HCT116 (cell line): ENCODE measurements at regions of chr20 and their contacts with region 1.

Region 1: GRCh38 chr20:1776681-1777475 is 118.3 kb upstream of the SIRPA start:
- DNase-seq: peak; percentile 79
- ATAC-seq: peak; percentile 90
- H3K4me3 ChIP-seq: peak overlapping the region; percentile 79 to 83
- H3K27ac ChIP-seq: peak overlapping the region; percentile 43
- H3K4me1 ChIP-seq: peaks cover 10 to 24% of the 10 kb centered on the region in 2 experiments; a peak in 3 of 4 replicates
- H3K27me3 ChIP-seq: no peaks in the 10 kb centered on the region
- CTCF ChIP-seq: peak; percentile 75 to 81 (median 79)
- POLR2A ChIP-seq: no peak
- RAD21 ChIP-seq: peak; percentile 77

Region 2: DNA sequence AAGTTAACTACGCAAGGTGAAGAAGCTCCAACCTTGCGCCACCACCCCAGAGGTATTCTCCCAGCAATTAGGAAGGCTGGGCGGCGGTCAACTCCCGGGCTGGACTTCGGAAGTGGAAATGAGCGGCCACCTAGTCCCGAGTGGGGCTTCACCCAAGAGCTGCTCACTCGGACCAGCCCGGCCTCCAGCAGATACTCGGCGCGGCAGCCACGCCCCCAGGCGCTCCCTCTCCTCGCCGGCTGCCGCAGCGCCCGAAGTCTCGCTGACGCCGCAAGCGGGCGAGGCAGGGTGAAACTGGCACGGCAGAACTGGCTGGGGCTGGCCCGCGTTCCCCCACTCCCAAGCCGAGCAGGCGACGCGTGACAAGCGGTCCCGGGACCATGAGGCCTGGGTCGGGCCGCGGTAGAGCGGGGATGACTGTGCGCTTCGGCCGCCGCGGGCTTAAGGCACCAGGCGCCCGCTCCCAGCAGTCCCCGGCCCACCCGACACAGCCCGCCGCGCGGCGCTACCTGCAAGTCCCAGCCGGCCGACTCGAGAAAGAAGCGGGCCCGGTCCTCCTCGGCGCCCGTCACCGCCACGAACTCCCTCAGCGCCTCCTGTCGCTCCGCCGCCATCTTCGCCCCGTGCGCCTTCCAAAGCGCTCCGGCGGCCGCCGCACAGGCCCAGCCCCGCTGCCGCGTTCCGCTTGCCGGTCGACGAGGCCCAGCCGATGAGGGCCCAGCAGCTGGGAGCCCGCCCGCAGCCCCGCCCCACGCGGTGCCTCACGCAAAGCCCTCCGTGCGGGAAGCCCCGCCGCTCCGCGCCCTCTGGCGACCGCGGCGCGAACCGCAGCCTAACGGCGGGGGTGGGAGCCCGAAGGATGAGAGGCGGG is 310.4 kb before region 1 on chr20 and contains the start of gene NSFL1C:
- CTCF ChIA-PET with region 1: interaction called, 3 read pairs
- POLR2A ChIA-PET with region 1: no interaction called
- RAD21 ChIA-PET with region 1: no interaction called
- intact Hi-C with region 1: loop called (anchors 5 kb)
- DNase-seq: peak; percentile 85
- ATAC-seq: peak; percentile 93
- H3K4me3 ChIP-seq: peak within 1 kb of the TSS; percentile 75 to 86
- H3K27ac ChIP-seq: peak within 1 kb of the TSS; percentile 71
- H3K4me1 ChIP-seq: peaks cover 12 to 36% of the 10 kb centered on the region in 2 experiments
- H3K27me3 ChIP-seq: no peaks in the 10 kb centered on the region
- CTCF ChIP-seq: peak; percentile 71 to 85 (median 84)
- POLR2A ChIP-seq: peak; percentile 43
- RAD21 ChIP-seq: peak; percentile 48; the same call in 1 of the 2 replicates
- total RNA-seq, gene NSFL1C: 93.4 TPM

Region 3: GRCh38 chr20:1503564-1504227 is 273.2 kb before region 1 on chr20:
- CTCF ChIA-PET with region 1: interaction called, 14 read pairs
- POLR2A ChIA-PET with region 1: no interaction called
- RAD21 ChIA-PET with region 1: no interaction called
- intact Hi-C with region 1: loop called (anchors 2 kb)
- DNase-seq: peak; percentile 91
- ATAC-seq: peak; percentile 97
- H3K4me3 ChIP-seq: no peak overlapping the region
- H3K27ac ChIP-seq: no peak overlapping the region
- H3K4me1 ChIP-seq: peaks cover 4 to 18% of the 10 kb centered on the region in 2 experiments
- H3K27me3 ChIP-seq: no peaks in the 10 kb centered on the region
- CTCF ChIP-seq: peak; percentile 99 to 100 (median 100)
- POLR2A ChIP-seq: no peak
- RAD21 ChIP-seq: peak; percentile 100

Region 4: GRCh38 chr20:1535420-1536175 is 241.3 kb before region 1 on chr20:
- CTCF ChIA-PET with region 1: interaction called, 10 read pairs
- POLR2A ChIA-PET with region 1: no interaction called
- RAD21 ChIA-PET with region 1: no interaction called
- intact Hi-C with region 1: no loop called
- DNase-seq: no peak
- ATAC-seq: no peak
- H3K4me3 ChIP-seq: no peak overlapping the region
- H3K27ac ChIP-seq: no peak overlapping the region
- H3K4me1 ChIP-seq: no peaks in the 10 kb centered on the region
- H3K27me3 ChIP-seq: no peaks in the 10 kb centered on the region
- CTCF ChIP-seq: no peak
- POLR2A ChIP-seq: no peak
- RAD21 ChIP-seq: no peak

Region 5: GRCh38 chr20:1802385-1803060 is 25.6 kb after region 1 on chr20:
- CTCF ChIA-PET with region 1: interaction called, 10 read pairs
- POLR2A ChIA-PET with region 1: no interaction called
- RAD21 ChIA-PET with region 1: interaction called in 1 of 2 experiments, 3 read pairs
- intact Hi-C with region 1: no loop called
- DNase-seq: no peak
- ATAC-seq: peak; percentile 91
- H3K4me3 ChIP-seq: peak overlapping the region; percentile 10 to 18; a peak in 2 of 4 replicates
- H3K27ac ChIP-seq: no peak overlapping the region
- H3K4me1 ChIP-seq: peaks cover 0 to 12% of the 10 kb centered on the region in 2 experiments; a peak in 3 of 4 replicates
- H3K27me3 ChIP-seq: no peaks in the 10 kb centered on the region
- CTCF ChIP-seq: peak; percentile 49 to 67 (median 53); a peak in 5 of 6 replicates
- POLR2A ChIP-seq: no peak
- RAD21 ChIP-seq: peak; percentile 77